CD4-positive, alpha-beta T cell (primary cell): ENCODE measurements at regions of chr6 and their contacts with region 1.

Region 1: DNA sequence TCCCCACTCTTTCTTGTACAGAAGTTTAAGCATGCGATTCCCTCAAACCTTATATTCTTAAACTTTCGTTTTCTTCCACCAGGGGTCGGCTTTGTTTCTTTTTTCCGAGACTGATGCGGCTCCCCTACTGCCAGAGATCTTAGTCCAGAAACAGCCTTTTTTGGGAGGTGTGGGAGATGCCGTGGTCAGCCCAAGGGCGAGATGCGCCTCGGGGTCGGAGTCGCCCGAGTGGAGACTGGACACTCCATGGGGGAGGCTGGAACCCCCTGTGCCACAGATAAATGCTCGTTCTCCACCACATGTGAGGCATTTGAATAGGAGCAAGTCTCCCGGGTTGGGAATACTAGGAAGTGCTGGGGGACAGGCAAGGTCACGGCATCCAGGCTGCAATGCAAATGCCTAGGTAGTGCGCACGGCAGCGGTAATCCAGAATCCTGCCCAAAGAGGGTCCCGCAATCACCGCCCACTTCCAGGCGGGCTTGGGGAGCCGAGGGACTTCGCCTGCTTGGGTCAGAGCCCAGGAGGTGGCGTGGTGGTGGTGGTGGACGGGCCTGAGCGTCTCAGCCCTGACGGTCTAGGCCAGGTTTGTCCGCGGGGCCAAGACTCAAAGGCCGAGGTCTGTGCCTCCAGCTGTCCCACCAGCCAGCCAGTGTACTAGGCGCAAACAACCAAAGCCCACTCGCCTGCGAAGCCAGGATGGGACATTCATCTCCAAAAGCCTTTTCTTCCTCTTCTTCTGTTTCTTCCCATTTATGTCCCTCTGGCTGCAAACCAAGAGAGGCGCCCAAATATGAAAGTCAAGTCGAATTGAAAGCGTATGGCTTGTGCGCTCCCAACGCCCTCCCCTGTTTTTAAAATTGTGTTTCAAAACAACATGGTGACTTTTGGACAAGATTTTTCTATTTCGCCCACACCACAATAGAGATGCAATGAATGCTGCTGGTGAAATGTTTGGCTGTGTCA is 39.3 kb upstream of the OSTM1 start:
- DNase-seq: peak in 3 of 14 experiments; percentile 37 to 48 (median 44)
- ATAC-seq: no peak
- H3K4me3 ChIP-seq: no peak overlapping the region
- H3K4me3 Mint-ChIP-seq: peak overlapping the region; percentile 56
- H3K27ac ChIP-seq: no peak overlapping the region
- H3K27ac Mint-ChIP-seq: no peak overlapping the region
- H3K4me1 ChIP-seq: peaks cover 53% of the 10 kb centered on the region
- H3K4me1 Mint-ChIP-seq: peaks cover 42% of the 10 kb centered on the region
- H3K27me3 ChIP-seq: peaks cover 64 to 92% of the 10 kb centered on the region in 2 experiments
- H3K27me3 Mint-ChIP-seq: peaks cover 88% of the 10 kb centered on the region
- CTCF ChIP-seq: no peak

Region 2: GRCh38 chr6:108002365-108003221 is 111.2 kb before region 1 on chr6:
- CTCF ChIA-PET with region 1: no interaction called
- POLR2A ChIA-PET with region 1: no interaction called
- intact Hi-C with region 1: no loop called
- DNase-seq: no peak
- ATAC-seq: no peak
- H3K4me3 ChIP-seq: no peak overlapping the region
- H3K4me3 Mint-ChIP-seq: no peak overlapping the region
- H3K27ac ChIP-seq: no peak overlapping the region
- H3K27ac Mint-ChIP-seq: no peak overlapping the region
- H3K4me1 ChIP-seq: no peaks in the 10 kb centered on the region
- H3K4me1 Mint-ChIP-seq: no peaks in the 10 kb centered on the region
- H3K27me3 ChIP-seq: no peaks in the 10 kb centered on the region
- H3K27me3 Mint-ChIP-seq: peaks cover 2% of the 10 kb centered on the region
- CTCF ChIP-seq: no peak

Region 3: GRCh38 chr6:108123946-108124345 is 10.1 kb after region 1 on chr6:
- CTCF ChIA-PET with region 1: no interaction called
- POLR2A ChIA-PET with region 1: no interaction called
- intact Hi-C with region 1: no loop called
- DNase-seq: no peak
- ATAC-seq: no peak
- H3K4me3 ChIP-seq: no peak overlapping the region
- H3K4me3 Mint-ChIP-seq: no peak overlapping the region
- H3K27ac ChIP-seq: no peak overlapping the region
- H3K27ac Mint-ChIP-seq: no peak overlapping the region
- H3K4me1 ChIP-seq: peaks cover 10% of the 10 kb centered on the region
- H3K4me1 Mint-ChIP-seq: peaks cover 13% of the 10 kb centered on the region
- H3K27me3 ChIP-seq: peaks cover 55 to 95% of the 10 kb centered on the region in 2 experiments
- H3K27me3 Mint-ChIP-seq: peaks cover 99% of the 10 kb centered on the region
- CTCF ChIP-seq: no peak

Region 4: DNA sequence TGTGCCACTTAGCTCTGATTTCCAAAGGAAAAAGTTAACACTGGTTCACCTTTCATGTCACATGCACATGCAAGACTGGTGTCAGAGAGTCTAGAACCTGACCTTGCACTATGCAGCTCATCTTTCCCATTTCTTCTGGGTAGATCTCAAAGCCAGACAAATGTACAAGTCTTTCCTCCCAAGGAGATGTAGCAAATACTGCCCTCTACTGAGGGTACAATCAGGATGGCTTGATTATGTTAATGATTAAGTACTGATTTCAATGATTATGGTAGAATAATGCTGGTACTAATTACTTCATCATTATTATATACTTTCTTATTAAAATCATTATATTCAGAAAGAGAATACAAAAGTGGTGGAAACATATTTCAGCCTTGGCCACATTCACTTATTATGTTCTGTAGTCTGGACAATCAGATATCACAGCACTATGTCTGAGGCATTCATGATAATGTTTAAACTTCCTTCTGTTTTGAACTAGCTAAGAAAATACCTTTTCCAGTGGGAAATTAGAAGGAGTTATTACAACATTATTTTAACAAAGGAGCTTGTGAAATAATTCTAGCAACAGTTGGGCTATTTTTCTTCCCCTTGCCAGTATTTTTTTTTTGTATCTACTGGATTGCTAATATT is 378.4 kb after region 1 on chr6:
- CTCF ChIA-PET with region 1: interaction called, 4 read pairs
- POLR2A ChIA-PET with region 1: no interaction called
- intact Hi-C with region 1: loop called (anchors 2 kb)
- DNase-seq: peak in 3 of 14 experiments; percentile 36 to 50 (median 47)
- ATAC-seq: no peak
- H3K4me3 ChIP-seq: no peak overlapping the region
- H3K4me3 Mint-ChIP-seq: no peak overlapping the region
- H3K27ac ChIP-seq: no peak overlapping the region
- H3K27ac Mint-ChIP-seq: no peak overlapping the region
- H3K4me1 ChIP-seq: no peaks in the 10 kb centered on the region
- H3K4me1 Mint-ChIP-seq: no peaks in the 10 kb centered on the region
- H3K27me3 ChIP-seq: no peaks in the 10 kb centered on the region
- H3K27me3 Mint-ChIP-seq: no peaks in the 10 kb centered on the region
- CTCF ChIP-seq: peak; percentile 54